ENCODE measurements at regions of chrX and their contacts with region 1.

Region 1: DNA sequence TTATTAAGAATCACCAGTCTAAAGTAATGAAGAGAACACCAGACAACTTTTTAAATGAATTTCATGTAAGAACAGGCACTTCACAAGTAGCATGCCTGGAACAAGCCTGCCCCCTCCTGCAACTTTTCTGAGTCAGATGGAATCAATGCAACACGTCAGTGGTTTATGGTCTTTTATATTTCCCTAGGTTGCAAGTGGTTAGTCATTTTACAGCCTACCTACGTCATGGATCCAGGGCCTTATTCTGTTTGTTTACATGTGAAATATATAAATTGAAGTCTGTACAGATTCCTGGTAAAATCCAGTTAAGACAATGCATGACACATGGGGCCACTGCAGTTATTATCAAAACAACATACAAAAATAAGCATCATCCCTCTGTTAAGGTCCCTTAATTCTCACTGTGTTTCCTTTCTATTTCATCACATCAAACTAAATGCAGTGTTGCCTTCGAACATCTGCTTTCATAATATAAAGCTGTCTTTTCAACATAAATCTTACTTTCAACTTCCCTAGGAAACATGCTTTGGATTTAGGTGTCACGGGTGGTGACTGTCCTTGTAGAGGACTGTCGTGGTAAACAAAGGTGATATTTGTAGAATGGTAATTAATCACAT is 309.3 kb downstream of the FRMPD4 start:
- DNase-seq: peak; percentile 91
- H3K4me3 ChIP-seq: no peak overlapping the region
- H3K27ac ChIP-seq: peak overlapping the region; percentile 84
- H3K4me1 ChIP-seq: peaks cover 17% of the 10 kb centered on the region
- H3K27me3 ChIP-seq: no peaks in the 10 kb centered on the region
- CTCF ChIP-seq: peak; percentile 9 to 46

Region 2: GRCh38 chrX:12138361-12139313 is 308.9 kb before region 1 on chrX and contains the start of gene FRMPD4:
- CTCF ChIA-PET with region 1: no interaction called
- dilution Hi-C with region 1: no loop called
- in situ Hi-C with region 1: no loop called
- intact Hi-C with region 1: loop called (anchors 1 kb)
- DNase-seq: peak; percentile 43
- H3K4me3 ChIP-seq: peak within 1 kb of the TSS; percentile 46 to 56 (median 46)
- H3K27ac ChIP-seq: no peak within 1 kb of the TSS
- H3K4me1 ChIP-seq: peaks cover 8% of the 10 kb centered on the region
- H3K27me3 ChIP-seq: no peaks in the 10 kb centered on the region
- CTCF ChIP-seq: peak in 1 of 2 donors; percentile 42
- total RNA-seq, gene FRMPD4: 0.17 to 0.24 TPM

Region 3: GRCh38 chrX:12370497-12370986 is 77.0 kb before region 1 on chrX:
- CTCF ChIA-PET with region 1: no interaction called
- dilution Hi-C with region 1: no loop called
- in situ Hi-C with region 1: no loop called
- intact Hi-C with region 1: loop called (anchors 1 kb)
- DNase-seq: no peak
- H3K4me3 ChIP-seq: no peak overlapping the region
- H3K27ac ChIP-seq: no peak overlapping the region
- H3K4me1 ChIP-seq: peaks cover 22% of the 10 kb centered on the region
- H3K27me3 ChIP-seq: no peaks in the 10 kb centered on the region
- CTCF ChIP-seq: no peak

Region 4: DNA sequence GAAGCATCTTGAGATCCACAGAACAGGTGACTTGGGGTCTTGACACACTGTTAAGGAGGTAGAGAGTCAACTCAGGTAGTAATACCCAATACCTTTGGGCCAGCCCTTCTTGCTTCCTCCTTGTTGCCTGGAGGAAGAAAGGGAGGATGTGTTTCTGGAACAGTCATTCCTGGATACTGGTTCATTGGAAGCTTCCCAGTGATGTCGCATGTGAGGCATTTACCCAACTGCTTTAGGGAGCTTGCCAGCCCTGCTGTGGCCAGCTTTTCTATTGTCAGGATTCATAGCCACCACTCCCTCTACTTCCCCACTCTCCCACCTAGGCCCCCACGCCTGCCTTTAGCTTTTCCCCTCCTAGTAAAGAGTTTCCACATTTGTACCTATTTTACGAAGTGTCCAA is 33.4 kb after region 1 on chrX:
- CTCF ChIA-PET with region 1: no interaction called
- dilution Hi-C with region 1: no loop called
- in situ Hi-C with region 1: no loop called
- intact Hi-C with region 1: loop called (anchors 1 kb)
- DNase-seq: peak; percentile 21
- H3K4me3 ChIP-seq: no peak overlapping the region
- H3K27ac ChIP-seq: no peak overlapping the region
- H3K4me1 ChIP-seq: no peaks in the 10 kb centered on the region
- H3K27me3 ChIP-seq: no peaks in the 10 kb centered on the region
- CTCF ChIP-seq: no peak

Region 5: DNA sequence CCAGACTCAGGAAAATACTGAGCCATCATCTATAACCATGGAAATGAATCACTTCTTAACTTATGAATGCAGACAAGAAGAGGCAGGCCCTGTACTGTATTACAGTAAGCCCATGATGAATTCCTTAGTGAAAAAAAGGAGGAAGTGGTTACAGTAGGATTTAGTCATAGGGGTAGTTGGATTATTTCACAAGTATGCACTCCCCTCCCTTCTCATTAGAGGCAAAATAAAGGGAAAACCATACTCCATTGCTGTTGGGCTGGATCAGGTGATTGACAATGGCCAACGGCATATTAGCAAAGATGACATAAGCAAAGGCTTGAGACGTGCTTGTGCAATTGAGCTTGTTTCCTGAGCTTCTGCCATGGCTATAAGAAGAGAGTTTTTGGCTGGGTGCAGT is 162.5 kb after region 1 on chrX:
- CTCF ChIA-PET with region 1: no interaction called
- dilution Hi-C with region 1: no loop called
- in situ Hi-C with region 1: no loop called
- intact Hi-C with region 1: loop called (anchors 5 kb)
- DNase-seq: peak; percentile 98
- H3K4me3 ChIP-seq: no peak overlapping the region
- H3K27ac ChIP-seq: peak overlapping the region; percentile 86
- H3K4me1 ChIP-seq: peaks cover 28% of the 10 kb centered on the region
- H3K27me3 ChIP-seq: no peaks in the 10 kb centered on the region
- CTCF ChIP-seq: no peak

Measured in mammary epithelial cell (primary cell).